ENCODE measurements at regions of chr9 and their contacts with region 1.

Region 1: DNA sequence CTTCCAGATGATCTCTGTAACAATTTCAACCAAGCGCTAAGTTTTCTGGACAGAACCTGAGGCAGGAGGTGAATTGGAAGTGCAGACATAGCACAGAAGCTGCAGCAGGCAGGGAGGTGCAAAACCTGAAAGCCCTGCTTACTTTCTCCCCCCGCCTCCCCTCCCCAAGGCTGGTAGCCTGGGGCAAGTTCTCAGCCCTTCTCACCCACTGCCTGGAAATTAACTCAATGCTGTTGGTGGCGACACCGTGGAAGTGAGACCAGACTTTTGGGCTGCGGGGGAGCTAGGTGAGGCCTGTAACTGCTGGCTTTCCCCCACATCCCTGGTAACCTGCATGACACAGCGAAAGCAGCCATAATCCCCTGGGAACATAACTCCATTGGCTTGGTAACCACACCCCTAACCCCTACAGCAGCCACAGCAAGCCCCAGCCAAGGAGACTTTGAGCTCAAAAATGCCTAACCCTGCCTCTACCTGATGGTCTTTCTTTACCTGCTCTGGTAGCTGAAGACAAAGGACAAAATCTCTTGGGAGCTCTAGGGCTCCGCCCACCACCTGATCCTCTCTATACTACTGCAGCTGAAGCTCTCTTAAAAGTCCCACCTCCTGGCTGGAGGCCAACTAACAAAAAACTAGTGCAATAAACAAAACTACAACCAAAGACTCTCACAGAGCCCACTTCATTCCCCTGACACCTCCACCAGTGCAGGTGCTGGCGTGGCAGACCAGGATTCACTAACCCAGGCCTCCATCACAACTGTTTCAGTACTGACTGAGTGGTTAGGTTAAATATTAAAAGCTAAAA is 11.9 kb upstream of the OR13C8 start:
- DNase-seq: no peak
- ATAC-seq: no peak

Region 2: GRCh38 chr9:104617418-104617817 is 60.4 kb after region 1 on chr9:
- intact Hi-C with region 1: loop called in 1 of 2 experiments (anchors 10 kb)
- DNase-seq: no peak
- ATAC-seq: no peak

Region 3: GRCh38 chr9:104725014-104725413 is 168.0 kb after region 1 on chr9:
- intact Hi-C with region 1: no loop called
- DNase-seq: no peak
- ATAC-seq: no peak